ENCODE measurements at regions of chr15 and their contacts with region 1.

Region 1: GRCh38 chr15:67150028-67150860 is 84.8 kb downstream of the SMAD3 start:
- DNase-seq: peak; percentile 94
- ATAC-seq: peak; percentile 56
- H3K4me3 ChIP-seq: peak overlapping the region; percentile 15; the same call in 1 of the 2 replicates
- H3K27ac ChIP-seq: peak overlapping the region; percentile 100
- H3K4me1 ChIP-seq: peaks cover 61% of the 10 kb centered on the region
- H3K27me3 ChIP-seq: no peaks in the 10 kb centered on the region
- CTCF ChIP-seq: no peak

Region 2: GRCh38 chr15:66700802-66701421 is 449.3 kb before region 1 on chr15:
- CTCF ChIA-PET with region 1: no interaction called
- POLR2A ChIA-PET with region 1: no interaction called
- intact Hi-C with region 1: no loop called
- DNase-seq: peak; percentile 94
- ATAC-seq: peak; percentile 53
- H3K4me3 ChIP-seq: peak overlapping the region; percentile 86
- H3K27ac ChIP-seq: peak overlapping the region; percentile 29; the same call in 1 of the 2 replicates
- H3K4me1 ChIP-seq: peaks cover 21% of the 10 kb centered on the region
- H3K27me3 ChIP-seq: no peaks in the 10 kb centered on the region
- CTCF ChIP-seq: no peak

Region 3: DNA sequence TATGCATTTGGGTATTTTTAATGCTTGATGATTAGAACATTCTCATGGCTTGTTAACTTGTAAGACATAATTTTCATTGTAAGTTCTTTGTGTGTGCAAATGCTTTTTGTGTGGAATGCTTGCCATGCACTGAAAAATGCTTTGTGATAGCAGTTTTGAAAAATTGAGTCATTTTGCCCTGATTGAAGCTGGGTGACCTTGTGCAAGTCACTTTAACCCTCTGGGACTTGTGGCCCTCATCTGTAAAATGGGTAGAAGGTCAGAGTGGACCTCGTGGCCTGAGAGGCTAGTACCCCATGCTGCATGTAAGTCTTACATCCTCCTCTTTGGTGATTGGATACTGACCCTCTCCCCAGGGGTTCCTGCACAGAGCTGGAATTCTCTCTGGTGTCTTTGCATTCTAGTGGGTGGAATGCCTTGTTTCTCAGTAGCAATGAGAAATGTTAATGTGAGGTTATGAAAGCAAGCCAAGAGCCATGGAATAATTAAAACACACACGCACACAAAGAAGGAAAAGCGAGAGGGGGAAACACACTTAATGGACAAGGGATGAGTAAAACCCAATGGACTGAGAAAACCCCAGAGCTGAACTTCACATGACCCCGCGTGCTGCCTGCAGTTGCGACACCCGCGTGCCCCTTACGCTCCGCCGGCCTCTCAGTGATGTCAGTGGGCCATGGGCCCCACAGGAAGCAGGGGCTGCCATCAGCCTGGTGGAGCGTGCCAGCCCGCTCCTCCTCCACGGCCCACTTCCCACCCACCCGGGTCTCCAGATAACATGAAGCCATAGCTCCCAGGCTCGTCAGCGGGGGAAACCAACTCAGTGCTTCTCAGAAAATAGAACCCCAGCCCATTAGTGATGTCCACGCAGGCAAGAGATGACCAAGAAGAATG is 40.9 kb before region 1 on chr15:
- CTCF ChIA-PET with region 1: interaction called, 3 read pairs
- POLR2A ChIA-PET with region 1: interaction called, 14 read pairs
- intact Hi-C with region 1: loop called (anchors 1 kb)
- DNase-seq: no peak
- ATAC-seq: no peak
- H3K4me3 ChIP-seq: no peak overlapping the region
- H3K27ac ChIP-seq: peak overlapping the region; percentile 99
- H3K4me1 ChIP-seq: peaks cover 57% of the 10 kb centered on the region
- H3K27me3 ChIP-seq: no peaks in the 10 kb centered on the region
- CTCF ChIP-seq: no peak

Region 4: DNA sequence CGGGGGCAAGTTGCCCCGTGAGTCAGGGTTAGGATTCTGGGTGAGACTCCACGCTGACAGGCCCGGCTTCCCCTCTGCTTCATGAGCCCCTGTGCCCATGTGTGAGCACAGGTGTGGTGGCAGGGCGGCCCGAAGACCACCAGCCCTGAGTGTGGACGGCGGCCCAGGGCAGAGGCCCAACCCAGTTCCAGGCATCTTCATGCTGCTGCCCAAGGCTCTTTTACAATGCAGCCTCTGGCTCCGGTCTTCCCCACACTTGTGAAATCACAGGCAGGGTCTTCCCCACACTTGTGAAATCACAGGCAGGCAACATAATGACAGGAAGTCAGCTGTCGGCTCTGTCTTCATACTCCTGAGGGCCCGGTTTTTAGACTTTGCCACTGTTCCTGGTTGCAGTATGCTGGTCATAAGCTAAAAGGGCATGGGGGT is 25.4 kb after region 1 on chr15:
- CTCF ChIA-PET with region 1: no interaction called
- POLR2A ChIA-PET with region 1: interaction called, 3 read pairs
- intact Hi-C with region 1: loop called (anchors 1 kb)
- DNase-seq: no peak
- ATAC-seq: no peak
- H3K4me3 ChIP-seq: no peak overlapping the region
- H3K27ac ChIP-seq: peak overlapping the region; percentile 93
- H3K4me1 ChIP-seq: peaks cover 81% of the 10 kb centered on the region
- H3K27me3 ChIP-seq: no peaks in the 10 kb centered on the region
- CTCF ChIP-seq: no peak

Region 5: GRCh38 chr15:67193223-67193990 is 43.2 kb after region 1 on chr15:
- CTCF ChIA-PET with region 1: no interaction called
- POLR2A ChIA-PET with region 1: interaction called, 11 read pairs
- intact Hi-C with region 1: no loop called
- DNase-seq: no peak
- ATAC-seq: no peak
- H3K4me3 ChIP-seq: no peak overlapping the region
- H3K27ac ChIP-seq: no peak overlapping the region
- H3K4me1 ChIP-seq: no peaks in the 10 kb centered on the region
- H3K27me3 ChIP-seq: no peaks in the 10 kb centered on the region
- CTCF ChIP-seq: no peak

Measured in PC-3 (cell line).